CD8-positive, alpha-beta T cell (primary cell): ENCODE measurements at regions of chr19 and their contacts with region 1.

Region 1: DNA sequence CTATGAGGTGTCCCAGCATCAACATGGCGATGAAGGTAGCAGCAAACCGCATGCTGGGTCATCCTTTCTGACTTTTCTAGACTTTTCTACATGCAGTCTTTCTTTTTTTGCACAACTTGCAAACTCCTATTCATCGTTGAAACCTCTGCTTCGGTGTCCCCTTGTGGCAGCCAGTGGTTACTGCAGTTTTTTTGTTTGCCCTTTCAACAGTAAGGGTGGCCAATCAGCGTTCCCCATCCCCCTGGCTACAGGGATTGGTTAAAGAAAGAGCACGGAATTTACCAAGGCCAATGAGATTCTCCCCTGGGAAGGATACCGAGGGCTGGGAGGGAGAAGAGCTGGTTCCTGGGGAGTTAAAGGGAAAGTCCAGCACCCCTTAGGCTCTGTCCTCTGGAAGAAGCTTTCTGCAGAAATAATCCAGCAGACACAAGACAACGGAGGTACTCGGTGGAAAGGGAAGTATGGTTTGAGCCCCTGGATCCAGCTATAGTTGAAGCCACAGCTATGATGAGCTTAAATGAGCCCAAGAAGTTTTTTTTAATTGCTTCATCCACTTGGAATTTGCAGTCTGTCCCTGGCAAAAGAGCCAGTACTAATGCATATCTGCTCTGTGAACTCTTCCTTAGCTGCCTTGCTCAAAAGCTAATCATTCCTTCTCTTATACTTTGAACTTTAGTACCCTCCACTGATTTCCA is 5.6 kb upstream of the LSM4 start:
- DNase-seq: peak; percentile 75 to 94 (median 84)
- ATAC-seq: peak; percentile 99
- H3K4me3 ChIP-seq: peak overlapping the region; percentile 17 to 25
- H3K4me3 Mint-ChIP-seq: peak overlapping the region; percentile 62
- H3K27ac ChIP-seq: peak overlapping the region in 1 of 2 experiments; percentile 31
- H3K27ac Mint-ChIP-seq: peak overlapping the region; percentile 2
- H3K4me1 ChIP-seq: peaks cover 14% of the 10 kb centered on the region
- H3K4me1 Mint-ChIP-seq: peaks cover 13% of the 10 kb centered on the region
- H3K27me3 ChIP-seq: no peaks in the 10 kb centered on the region
- H3K27me3 Mint-ChIP-seq: no peaks in the 10 kb centered on the region
- CTCF ChIP-seq: peak; percentile 85

Region 2: DNA sequence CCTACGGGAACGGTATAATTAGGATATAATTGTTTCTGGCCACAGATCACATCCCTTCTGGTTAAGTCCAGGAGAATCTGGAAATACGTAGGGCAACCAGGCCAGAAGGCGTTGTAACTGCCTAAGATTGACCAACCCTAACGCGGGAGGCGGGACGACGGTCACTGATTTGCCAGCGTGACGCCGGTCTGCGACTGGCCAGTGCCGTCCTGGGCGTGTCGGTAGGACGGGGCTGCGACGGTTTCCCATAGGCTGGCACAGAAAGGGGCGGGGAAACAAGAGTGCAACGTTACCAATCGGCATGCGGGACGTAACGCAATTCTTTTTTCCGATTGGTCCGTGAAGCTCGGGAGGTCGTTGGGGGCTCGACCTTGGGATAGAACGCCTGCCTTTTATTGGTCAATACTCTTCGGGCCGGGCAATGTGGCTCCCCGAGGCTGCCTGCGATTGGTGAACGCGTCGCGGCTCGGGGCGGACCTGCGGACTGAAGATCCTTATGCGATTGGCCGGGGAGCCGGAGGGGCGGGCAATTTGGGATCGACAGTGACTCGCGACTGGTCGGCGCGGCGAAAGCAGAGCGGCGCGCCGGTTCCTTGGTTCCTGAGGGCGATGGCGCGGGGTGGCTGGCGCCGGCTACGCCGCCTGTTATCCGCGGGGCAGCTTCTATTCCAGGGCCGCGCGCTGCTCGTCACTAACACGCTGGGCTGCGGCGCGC is 135.7 kb before region 1 on chr19 and contains the start of gene MPV17L2:
- CTCF ChIA-PET with region 1: interaction called, 5 read pairs
- POLR2A ChIA-PET with region 1: interaction called, 4 read pairs
- intact Hi-C with region 1: loop called (anchors 1 kb)
- DNase-seq: peak; percentile 95 to 100 (median 97)
- ATAC-seq: peak; percentile 84
- H3K4me3 ChIP-seq: peak within 1 kb of the TSS; percentile 73
- H3K4me3 Mint-ChIP-seq: peak within 1 kb of the TSS; percentile 87
- H3K27ac ChIP-seq: peak within 1 kb of the TSS; percentile 64 to 82
- H3K27ac Mint-ChIP-seq: peak within 1 kb of the TSS; percentile 90
- H3K4me1 ChIP-seq: peaks cover 18% of the 10 kb centered on the region
- H3K4me1 Mint-ChIP-seq: peaks cover 22% of the 10 kb centered on the region
- H3K27me3 ChIP-seq: no peaks in the 10 kb centered on the region
- H3K27me3 Mint-ChIP-seq: no peaks in the 10 kb centered on the region
- CTCF ChIP-seq: no peak
- total RNA-seq, gene MPV17L2: 4.0 to 5.2 TPM

Region 3: DNA sequence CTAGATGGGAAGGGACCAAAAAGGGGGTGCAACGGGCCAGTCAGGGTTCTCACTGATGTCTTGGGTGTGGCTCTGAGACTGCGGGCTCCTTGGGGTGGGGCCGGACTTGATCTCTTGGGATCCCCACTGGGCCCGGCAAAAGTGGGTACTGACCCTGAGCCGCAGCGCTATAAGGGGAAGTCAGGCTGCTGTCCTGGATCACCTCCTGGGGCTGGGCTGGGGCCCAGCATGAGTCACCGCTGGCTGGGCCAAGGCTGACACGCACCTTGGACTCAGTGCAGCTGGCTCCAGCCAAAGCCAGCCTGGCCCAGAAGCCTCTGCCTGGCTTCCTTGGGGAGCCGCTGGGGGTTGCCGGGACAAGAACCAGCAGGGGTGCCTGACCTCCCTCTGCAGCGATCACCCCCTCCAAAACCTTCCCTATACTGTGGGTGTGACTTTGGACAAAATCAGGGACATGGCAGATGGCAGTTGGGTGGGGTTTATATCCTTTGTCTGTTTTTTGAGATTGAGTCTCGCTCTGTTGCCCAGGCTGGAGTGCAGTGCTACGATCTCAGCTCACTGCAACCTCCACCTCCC is 53.6 kb before region 1 on chr19:
- CTCF ChIA-PET with region 1: interaction called, 318 read pairs
- POLR2A ChIA-PET with region 1: interaction called, 267 read pairs
- intact Hi-C with region 1: loop called (anchors 1 kb)
- DNase-seq: peak in 3 of 9 experiments; percentile 35 to 65 (median 55)
- ATAC-seq: no peak
- H3K4me3 ChIP-seq: no peak overlapping the region
- H3K4me3 Mint-ChIP-seq: no peak overlapping the region
- H3K27ac ChIP-seq: no peak overlapping the region
- H3K27ac Mint-ChIP-seq: peak overlapping the region; percentile 57
- H3K4me1 ChIP-seq: peaks cover 33% of the 10 kb centered on the region
- H3K4me1 Mint-ChIP-seq: peaks cover 41% of the 10 kb centered on the region
- H3K27me3 ChIP-seq: no peaks in the 10 kb centered on the region
- H3K27me3 Mint-ChIP-seq: no peaks in the 10 kb centered on the region
- CTCF ChIP-seq: no peak

Region 4: GRCh38 chr19:18340190-18340989 is 11.9 kb after region 1 on chr19 and contains the start of gene PGPEP1:
- CTCF ChIA-PET with region 1: interaction called, 16 read pairs
- POLR2A ChIA-PET with region 1: no interaction called
- intact Hi-C with region 1: loop called in 1 of 2 experiments (anchors 2 kb)
- DNase-seq: peak; percentile 13 to 84 (median 67)
- ATAC-seq: peak; percentile 39
- H3K4me3 ChIP-seq: peak within 1 kb of the TSS; percentile 50 to 75
- H3K4me3 Mint-ChIP-seq: peak within 1 kb of the TSS; percentile 88
- H3K27ac ChIP-seq: peak within 1 kb of the TSS; percentile 49 to 51
- H3K27ac Mint-ChIP-seq: peak within 1 kb of the TSS; percentile 85
- H3K4me1 ChIP-seq: peaks cover 15% of the 10 kb centered on the region
- H3K4me1 Mint-ChIP-seq: peaks cover 13% of the 10 kb centered on the region
- H3K27me3 ChIP-seq: no peaks in the 10 kb centered on the region
- H3K27me3 Mint-ChIP-seq: no peaks in the 10 kb centered on the region
- CTCF ChIP-seq: no peak
- total RNA-seq, gene PGPEP1: 20.0 to 25.2 TPM

Region 5: GRCh38 chr19:18388100-18388959 is 59.8 kb after region 1 on chr19:
- CTCF ChIA-PET with region 1: interaction called, 13 read pairs
- POLR2A ChIA-PET with region 1: interaction called, 5 read pairs
- intact Hi-C with region 1: no loop called
- DNase-seq: peak; percentile 58 to 89 (median 76)
- ATAC-seq: peak; percentile 93
- H3K4me3 ChIP-seq: peak overlapping the region; percentile 38 to 43
- H3K4me3 Mint-ChIP-seq: peak overlapping the region; percentile 77
- H3K27ac ChIP-seq: no peak overlapping the region
- H3K27ac Mint-ChIP-seq: no peak overlapping the region
- H3K4me1 ChIP-seq: peaks cover 8% of the 10 kb centered on the region
- H3K4me1 Mint-ChIP-seq: peaks cover 8% of the 10 kb centered on the region
- H3K27me3 ChIP-seq: peaks cover 20 to 21% of the 10 kb centered on the region in 2 experiments
- H3K27me3 Mint-ChIP-seq: peaks cover 24% of the 10 kb centered on the region
- CTCF ChIP-seq: peak; percentile 99

Region 6: GRCh38 chr19:18419195-18419698 is 90.8 kb after region 1 on chr19 and contains the start of gene SSBP4:
- CTCF ChIA-PET with region 1: interaction called, 5 read pairs
- POLR2A ChIA-PET with region 1: no interaction called
- intact Hi-C with region 1: loop called in 1 of 2 experiments (anchors 5 kb)
- DNase-seq: peak; percentile 43 to 87 (median 61)
- ATAC-seq: peak; percentile 50
- H3K4me3 ChIP-seq: peak within 1 kb of the TSS; percentile 55 to 74
- H3K4me3 Mint-ChIP-seq: peak within 1 kb of the TSS; percentile 84
- H3K27ac ChIP-seq: peak within 1 kb of the TSS in 1 of 2 experiments; percentile 74
- H3K27ac Mint-ChIP-seq: peak within 1 kb of the TSS; percentile 91
- H3K4me1 ChIP-seq: peaks cover 87% of the 10 kb centered on the region
- H3K4me1 Mint-ChIP-seq: peaks cover 77% of the 10 kb centered on the region
- H3K27me3 ChIP-seq: peaks cover 0 to 7% of the 10 kb centered on the region in 2 experiments
- H3K27me3 Mint-ChIP-seq: peaks cover 14% of the 10 kb centered on the region
- CTCF ChIP-seq: no peak
- total RNA-seq, gene SSBP4: 49.9 to 58.2 TPM